ENCODE measurements at regions of chr1 and their contacts with region 1.

Region 1: GRCh38 chr1:45569962-45570581 is 13.8 kb upstream of the NASP start:
- DNase-seq: peak; percentile 57 to 81 (median 78)
- ATAC-seq: peak; percentile 60 to 68
- H3K4me3 ChIP-seq: no peak overlapping the region
- H3K27ac ChIP-seq: no peak overlapping the region
- H3K4me1 ChIP-seq: peaks cover 2% of the 10 kb centered on the region
- H3K27me3 ChIP-seq: no peaks in the 10 kb centered on the region

Region 2: DNA sequence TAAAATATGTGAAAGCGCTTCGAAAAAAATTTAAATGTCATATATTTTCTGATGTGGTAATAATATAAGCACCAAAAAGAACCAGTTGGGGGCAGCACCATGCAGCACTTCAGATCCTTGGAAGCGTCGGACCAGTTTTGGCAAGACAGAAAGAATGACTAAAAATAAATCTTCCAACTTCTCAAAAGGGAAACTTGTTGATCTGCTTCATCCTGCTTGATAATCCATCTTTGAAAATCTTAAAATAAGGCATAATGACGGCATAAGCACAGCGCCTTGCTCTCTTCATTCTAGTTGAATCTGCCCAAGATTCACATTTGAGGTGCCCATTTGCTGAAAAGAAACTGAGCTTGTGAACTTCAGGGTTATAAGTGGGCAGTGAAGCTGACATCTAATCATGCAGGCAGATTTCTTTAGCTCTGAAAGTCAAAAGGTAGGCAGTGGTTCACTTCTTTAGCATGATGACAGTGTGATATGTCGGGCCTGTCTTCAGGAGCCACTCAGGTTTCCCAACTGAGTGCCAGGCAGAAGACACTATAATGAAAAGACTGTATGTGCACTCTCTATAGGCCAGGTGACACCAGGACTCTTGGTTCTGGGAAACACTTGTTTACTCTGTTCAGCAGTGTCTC is 210.1 kb before region 1 on chr1:
- intact Hi-C with region 1: loop called (anchors 2 to 10 kb)
- DNase-seq: peak; percentile 63 to 84 (median 74)
- ATAC-seq: peak; percentile 76 to 82
- H3K4me3 ChIP-seq: no peak overlapping the region
- H3K27ac ChIP-seq: peak overlapping the region; percentile 80
- H3K4me1 ChIP-seq: peaks cover 1% of the 10 kb centered on the region
- H3K27me3 ChIP-seq: no peaks in the 10 kb centered on the region

Region 3: GRCh38 chr1:45512641-45513054 is 57.4 kb before region 1 on chr1:
- intact Hi-C with region 1: loop called (anchors 5 to 10 kb)
- DNase-seq: peak in 2 of 3 donors; percentile 51 to 67
- ATAC-seq: peak; percentile 44 to 55
- H3K4me3 ChIP-seq: no peak overlapping the region
- H3K27ac ChIP-seq: no peak overlapping the region
- H3K4me1 ChIP-seq: no peaks in the 10 kb centered on the region
- H3K27me3 ChIP-seq: no peaks in the 10 kb centered on the region

Region 4: DNA sequence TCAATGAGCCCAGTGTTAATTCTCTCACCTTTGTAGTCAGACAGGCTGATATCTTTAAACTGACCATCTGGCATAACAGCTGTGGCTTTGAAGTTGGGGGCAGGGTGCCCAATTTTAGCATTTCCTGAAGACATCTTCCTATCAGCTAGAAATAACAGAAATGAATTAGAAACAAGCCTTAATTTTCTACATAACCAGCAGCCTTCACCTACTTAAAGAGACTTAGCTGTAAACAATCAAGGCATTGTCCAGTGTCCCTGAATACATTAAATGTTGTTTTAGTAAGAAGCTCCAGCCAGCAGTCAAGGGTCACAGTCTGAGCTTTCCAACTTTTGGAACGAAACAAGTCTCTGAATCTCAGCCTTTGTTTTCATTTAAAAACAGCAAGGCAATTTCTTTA is 51.2 kb before region 1 on chr1:
- intact Hi-C with region 1: loop called in 3 of 4 experiments (anchors 5 to 10 kb)
- DNase-seq: no peak
- ATAC-seq: no peak
- H3K4me3 ChIP-seq: peak overlapping the region; percentile 5
- H3K27ac ChIP-seq: no peak overlapping the region
- H3K4me1 ChIP-seq: no peaks in the 10 kb centered on the region
- H3K27me3 ChIP-seq: no peaks in the 10 kb centered on the region